ENCODE measurements at regions of chr22 and their contacts with region 1.

Region 1: DNA sequence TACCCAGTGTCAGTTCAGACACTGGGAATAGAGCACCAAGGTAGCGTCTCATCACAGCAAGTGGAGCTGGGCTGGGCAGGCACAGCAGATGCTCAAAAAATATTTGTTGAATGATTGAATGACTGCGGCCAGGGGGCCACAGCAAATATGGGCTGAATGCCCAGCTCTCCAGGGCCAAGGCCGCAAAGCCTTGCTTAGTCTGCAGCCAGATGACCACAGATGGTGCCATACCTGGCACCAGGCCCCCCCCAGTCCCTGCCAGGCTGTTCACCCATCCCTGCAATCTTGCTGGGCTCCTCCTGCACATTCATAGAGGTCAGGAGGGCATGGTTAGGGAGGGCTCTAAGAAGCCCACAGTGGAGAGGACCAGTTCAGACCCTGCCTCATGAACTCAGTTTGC is 32.9 kb downstream of the ZC3H7B start:
- DNase-seq: no peak
- H3K4me3 ChIP-seq: no peak overlapping the region
- H3K27ac ChIP-seq: no peak overlapping the region
- H3K4me1 ChIP-seq: no peaks in the 10 kb centered on the region
- H3K27me3 ChIP-seq: no peaks in the 10 kb centered on the region
- CTCF ChIP-seq: no peak
- POLR2A ChIP-seq: no peak

Region 2: GRCh38 chr22:40911772-40912171 is 422.4 kb before region 1 on chr22:
- intact Hi-C with region 1: loop called (anchors 10 kb)
- DNase-seq: no peak
- H3K4me3 ChIP-seq: no peak overlapping the region
- H3K27ac ChIP-seq: no peak overlapping the region
- H3K4me1 ChIP-seq: no peaks in the 10 kb centered on the region
- H3K27me3 ChIP-seq: no peaks in the 10 kb centered on the region
- CTCF ChIP-seq: no peak
- POLR2A ChIP-seq: no peak

Region 3: DNA sequence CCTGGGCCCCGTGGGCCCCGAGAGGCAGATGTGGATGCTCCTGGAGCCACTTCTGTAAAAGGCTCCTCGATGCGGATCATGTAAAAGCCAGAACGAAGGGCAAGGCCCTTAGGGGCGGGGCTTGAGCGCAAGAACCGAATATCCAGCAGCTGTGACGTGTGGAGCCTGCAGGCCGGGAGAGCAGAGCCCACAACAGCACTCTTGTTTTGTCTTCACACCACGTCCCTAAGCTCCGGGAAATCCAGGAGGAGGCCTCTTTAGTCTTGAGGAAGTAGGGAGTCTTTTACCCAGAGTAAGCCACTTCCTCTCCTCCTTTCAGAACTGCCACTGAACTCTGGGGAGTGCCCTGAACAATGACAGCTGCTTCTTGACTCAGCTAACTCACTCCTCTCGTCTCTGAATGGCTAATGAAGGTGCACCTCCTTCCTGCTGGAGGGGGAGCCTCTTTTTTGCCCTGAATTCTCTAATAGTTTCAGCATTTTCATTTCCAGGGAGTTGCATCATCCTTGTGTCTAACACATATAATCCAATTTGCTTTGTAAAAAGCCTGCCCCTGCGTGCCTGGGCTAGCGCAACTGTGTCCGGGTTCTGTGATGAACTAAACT is 116.6 kb before region 1 on chr22:
- intact Hi-C with region 1: loop called (anchors 10 kb)
- DNase-seq: peak in 1 of 2 donors; percentile 35
- H3K4me3 ChIP-seq: peak overlapping the region in 1 of 3 donors; percentile 11
- H3K27ac ChIP-seq: peak overlapping the region; percentile 62 to 70
- H3K4me1 ChIP-seq: no peaks in the 10 kb centered on the region
- H3K27me3 ChIP-seq: no peaks in the 10 kb centered on the region
- CTCF ChIP-seq: no peak
- POLR2A ChIP-seq: no peak

Measured in breast epithelium (tissue), 4 donors.